MCF 10A (cell line): ENCODE measurements at regions of chr5 and their contacts with region 1.

Region 1: DNA sequence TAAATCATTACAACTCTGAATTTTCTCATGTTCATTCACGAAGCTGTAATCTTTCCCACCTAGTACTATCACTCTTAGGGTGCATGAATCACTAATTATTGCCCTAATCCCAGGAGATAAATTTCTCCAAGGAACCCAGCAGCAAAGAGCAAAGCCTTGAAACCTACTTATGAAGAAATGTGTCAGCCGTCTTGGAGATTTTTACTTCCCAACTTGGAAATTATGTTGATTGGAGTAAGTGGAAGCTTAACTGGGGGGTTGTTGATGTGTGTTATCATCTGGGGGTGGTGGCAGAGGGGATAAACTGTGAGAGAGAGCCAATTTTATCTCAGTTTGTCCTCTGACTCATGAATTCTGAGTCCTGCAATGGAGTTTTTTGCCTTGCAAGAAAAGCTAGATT is 440.5 kb upstream of the WWC1 start:
- DNase-seq: no peak
- H3K4me3 Mint-ChIP-seq: no peak overlapping the region
- H3K27ac Mint-ChIP-seq: no peak overlapping the region
- H3K4me1 Mint-ChIP-seq: no peaks in the 10 kb centered on the region
- H3K27me3 Mint-ChIP-seq: no peaks in the 10 kb centered on the region
- CTCF ChIP-seq: no peak

Region 2: DNA sequence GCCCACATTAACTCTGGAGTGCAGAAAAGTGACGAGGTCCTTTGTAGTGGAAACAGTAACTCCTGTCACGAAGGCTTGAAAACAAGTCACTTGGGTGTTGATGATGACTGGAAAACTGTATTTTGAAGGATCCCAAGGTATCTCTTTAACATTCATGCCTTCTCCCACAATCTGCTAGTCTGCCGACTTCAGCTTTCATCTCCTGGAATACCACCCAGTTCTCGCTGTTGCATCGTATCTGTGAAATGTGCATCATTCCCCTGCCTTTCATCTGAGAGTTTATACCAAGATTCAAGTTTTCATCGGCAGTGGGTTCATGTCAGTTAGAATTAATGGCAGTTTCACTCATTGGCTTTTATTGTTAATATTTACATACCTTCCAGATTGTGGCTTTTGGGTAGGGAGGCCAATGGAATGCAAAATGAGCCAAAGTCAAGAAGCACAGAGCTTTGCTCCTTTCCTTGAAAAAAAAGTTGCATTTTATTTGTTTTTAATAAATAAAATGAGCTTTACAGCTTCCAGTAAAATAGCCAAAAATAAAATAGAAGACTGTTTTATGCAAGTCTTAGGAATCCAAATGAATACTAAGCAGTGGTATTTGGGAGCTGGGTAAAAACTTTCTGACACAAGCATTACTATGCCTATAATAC is 134.7 kb before region 1 on chr5:
- CTCF ChIA-PET with region 1: no interaction called
- POLR2A ChIA-PET with region 1: no interaction called
- intact Hi-C with region 1: no loop called
- DNase-seq: no peak
- H3K4me3 Mint-ChIP-seq: no peak overlapping the region
- H3K27ac Mint-ChIP-seq: no peak overlapping the region
- H3K4me1 Mint-ChIP-seq: peaks cover 10% of the 10 kb centered on the region
- H3K27me3 Mint-ChIP-seq: no peaks in the 10 kb centered on the region
- CTCF ChIP-seq: no peak

Region 3: DNA sequence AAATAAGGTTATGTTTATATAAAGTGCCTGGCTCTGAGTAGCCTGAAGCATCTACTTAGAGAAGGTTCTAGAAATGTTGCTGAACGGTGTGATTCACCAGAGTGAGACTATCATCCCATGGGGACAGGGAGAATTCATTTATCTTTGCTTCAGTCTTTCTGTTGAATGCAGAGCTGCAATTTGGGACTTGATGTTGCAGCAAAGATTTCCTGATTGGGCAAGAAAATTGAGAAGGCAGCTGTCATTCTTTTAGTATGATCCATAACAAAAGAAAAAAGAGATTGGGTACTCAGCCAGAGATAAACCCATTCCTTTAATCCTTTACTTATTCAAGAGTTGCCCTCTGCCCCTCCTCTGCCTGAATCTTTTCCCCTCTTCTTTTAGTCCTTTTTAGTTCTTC is 15.8 kb before region 1 on chr5:
- CTCF ChIA-PET with region 1: interaction called, 3 read pairs
- POLR2A ChIA-PET with region 1: interaction called, 11 read pairs
- intact Hi-C with region 1: no loop called
- DNase-seq: no peak
- H3K4me3 Mint-ChIP-seq: no peak overlapping the region
- H3K27ac Mint-ChIP-seq: no peak overlapping the region
- H3K4me1 Mint-ChIP-seq: peaks cover 11% of the 10 kb centered on the region
- H3K27me3 Mint-ChIP-seq: no peaks in the 10 kb centered on the region
- CTCF ChIP-seq: no peak